Left colon (tissue), 2 donors: ENCODE measurements at regions of chr5 and their contacts with region 1.

Region 1: GRCh38 chr5:54905943-54906537 is 79.4 kb downstream of the ESM1 start:
- DNase-seq: peak in 1 of 2 donors; percentile 75
- ATAC-seq: no peak

Region 2: GRCh38 chr5:54947187-54947586 is 41.1 kb after region 1 on chr5:
- intact Hi-C with region 1: no loop called
- DNase-seq: no peak
- ATAC-seq: no peak

Region 3: DNA sequence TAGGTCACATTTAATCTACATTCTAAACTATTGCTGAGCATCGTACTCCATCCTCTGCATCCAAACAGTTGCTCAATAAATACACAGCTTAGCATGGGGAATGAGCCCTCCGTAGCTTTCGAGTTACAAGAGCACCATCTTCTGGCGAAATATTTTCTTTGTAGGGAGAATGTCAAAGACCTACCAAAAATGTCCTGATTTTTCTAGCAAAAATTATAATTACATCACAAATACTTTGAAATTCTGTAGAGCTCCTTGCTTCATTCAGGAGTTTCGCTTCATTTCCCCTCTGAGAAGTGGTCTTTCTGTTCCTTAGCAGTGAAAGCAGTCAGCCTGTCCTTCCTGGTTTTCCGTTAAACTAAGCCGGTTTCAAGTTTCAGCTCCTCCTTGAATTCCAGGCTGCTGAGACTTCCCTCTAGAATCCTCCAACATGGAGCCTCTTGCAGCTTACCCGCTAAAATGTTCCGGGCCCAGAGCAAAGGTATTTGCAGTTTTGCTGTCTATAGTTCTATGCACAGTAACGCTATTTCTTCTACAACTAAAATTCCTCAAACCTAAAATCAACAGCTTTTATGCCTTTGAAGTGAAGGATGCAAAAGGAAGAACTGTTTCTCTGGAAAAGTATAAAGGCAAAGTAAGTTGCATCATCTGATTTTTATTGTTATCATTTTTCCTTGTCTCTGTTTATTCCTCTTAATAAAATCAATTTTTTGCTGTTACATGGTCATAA is 253.9 kb after region 1 on chr5 and contains the start of gene GPX8:
- intact Hi-C with region 1: loop called in 1 of 2 experiments (anchors 10 kb)
- DNase-seq: no peak
- ATAC-seq: peak; percentile 70
- total RNA-seq, gene GPX8: 4.0 to 5.2 TPM